ENCODE measurements at regions of chr19 and their contacts with region 1.

Region 1: GRCh38 chr19:58475714-58476497 is at the start of gene ZNF446:
- DNase-seq: peak; percentile 97
- H3K4me3 ChIP-seq: peak within 1 kb of the TSS; percentile 49 to 70 (median 56)
- H3K27ac ChIP-seq: peak within 1 kb of the TSS; percentile 73
- H3K4me1 ChIP-seq: peaks cover 9% of the 10 kb centered on the region
- H3K27me3 ChIP-seq: no peaks in the 10 kb centered on the region
- CTCF ChIP-seq: no peak
- POLR2A ChIP-seq: peak; percentile 70
- total RNA-seq, gene ZNF446: 6.6 and 7.0 TPM in 2 replicates

Region 2: GRCh38 chr19:58372311-58373133 is 103.4 kb before region 1 on chr19:
- CTCF ChIA-PET with region 1: no interaction called
- POLR2A ChIA-PET with region 1: no interaction called
- dilution Hi-C with region 1: no loop called
- intact Hi-C with region 1: no loop called
- DNase-seq: no peak
- H3K4me3 ChIP-seq: no peak overlapping the region
- H3K27ac ChIP-seq: no peak overlapping the region
- H3K4me1 ChIP-seq: no peaks in the 10 kb centered on the region
- H3K27me3 ChIP-seq: peaks cover 6 to 19% of the 10 kb centered on the region in 2 experiments
- CTCF ChIP-seq: peak in 1 of 2 donors; percentile 8
- POLR2A ChIP-seq: no peak

Region 3: DNA sequence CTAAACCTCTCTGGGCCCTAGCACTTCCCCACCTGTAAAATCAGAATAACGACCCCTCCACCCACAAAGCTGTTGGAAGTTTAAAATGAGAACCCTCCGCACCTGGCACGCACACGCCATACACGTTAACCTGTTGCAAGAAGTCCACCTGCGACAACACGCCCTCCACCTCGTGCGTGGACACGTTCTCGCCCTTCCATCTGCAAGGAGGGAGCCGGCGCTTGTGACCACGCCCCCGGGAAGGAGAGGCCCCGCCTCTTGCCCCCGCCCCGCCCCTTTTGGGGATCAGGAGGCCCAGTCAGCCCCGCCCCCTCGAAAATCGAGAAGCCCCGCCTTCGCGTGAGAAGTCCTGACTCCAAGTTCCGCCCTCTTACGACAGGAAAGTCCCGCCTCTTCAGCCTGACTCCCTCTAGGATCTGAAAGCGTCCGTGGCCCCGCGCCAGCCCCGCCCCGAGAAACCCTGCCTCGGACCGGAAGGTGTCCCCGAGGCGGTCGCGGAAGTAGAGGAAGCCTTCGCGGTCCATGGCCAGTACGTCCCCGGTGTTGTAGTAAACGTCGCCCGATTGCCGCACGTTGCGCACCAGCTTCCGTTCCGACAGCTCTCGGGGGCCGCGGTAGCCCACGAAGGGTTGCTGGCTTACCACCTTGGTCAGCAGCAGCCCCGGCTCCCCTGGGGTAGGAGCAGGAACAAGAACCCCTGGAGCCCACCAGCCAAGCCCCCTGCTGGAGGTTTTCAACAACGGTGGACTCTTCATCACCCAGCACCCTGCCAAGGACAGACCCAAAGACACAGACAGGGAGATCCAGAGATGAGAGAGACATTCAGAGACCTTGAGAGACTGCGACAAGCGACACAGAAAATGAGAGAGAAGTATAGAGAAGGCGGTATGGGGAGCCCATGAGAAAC is 23.4 kb after region 1 on chr19:
- CTCF ChIA-PET with region 1: no interaction called
- POLR2A ChIA-PET with region 1: no interaction called
- dilution Hi-C with region 1: no loop called
- intact Hi-C with region 1: loop called (anchors 1 kb)
- DNase-seq: peak; percentile 96
- H3K4me3 ChIP-seq: peak overlapping the region in 2 of 3 experiments; percentile 24 to 45
- H3K27ac ChIP-seq: no peak overlapping the region
- H3K4me1 ChIP-seq: peaks cover 4% of the 10 kb centered on the region
- H3K27me3 ChIP-seq: no peaks in the 10 kb centered on the region
- CTCF ChIP-seq: peak; percentile 19 to 43
- POLR2A ChIP-seq: peak; percentile 73

Measured in endothelial cell of umbilical vein (primary cell).